A549 (cell line): ENCODE measurements at regions of chr7 and their contacts with region 1.

Region 1: GRCh38 chr7:134432296-134433152 is 26.4 kb downstream of the AKR1B1 start:
- DNase-seq: peak; percentile 99 to 100
- ATAC-seq: peak; percentile 92 to 96
- H3K4me3 ChIP-seq: peak overlapping the region; percentile 46
- H3K27ac ChIP-seq: peak overlapping the region; percentile 79 to 88
- H3K4me1 ChIP-seq: peaks cover 30% of the 10 kb centered on the region
- CTCF ChIP-seq: peak; percentile 100
- EP300 ChIP-seq: no peak
- POLR2A ChIP-seq: no peak; the same call in 1 of the 2 replicates
- RAD21 ChIP-seq: peak; percentile 100

Region 2: DNA sequence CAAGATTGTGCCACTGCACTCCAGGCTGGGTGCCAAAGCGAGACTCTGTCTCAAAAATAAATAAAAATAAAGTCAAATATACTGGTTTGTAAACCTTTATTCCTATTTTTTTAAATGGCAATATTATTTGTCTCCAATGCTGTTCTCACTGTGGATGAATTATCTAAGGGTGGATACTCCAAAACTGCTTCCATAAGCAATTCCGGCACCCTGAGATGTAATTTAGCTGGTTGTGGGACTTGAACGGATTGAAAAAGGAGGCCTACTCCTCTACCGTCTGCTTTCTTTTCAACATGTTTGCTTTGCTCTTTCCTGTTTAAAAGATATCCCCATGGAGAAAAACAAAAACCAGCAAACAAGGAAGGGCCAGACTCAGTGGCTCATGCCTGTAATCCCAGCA is 170.2 kb before region 1 on chr7:
- CTCF ChIA-PET with region 1: no interaction called
- POLR2A ChIA-PET with region 1: no interaction called
- DNase-seq: no peak
- ATAC-seq: no peak
- H3K4me3 ChIP-seq: no peak overlapping the region
- H3K27ac ChIP-seq: no peak overlapping the region
- H3K4me1 ChIP-seq: no peaks in the 10 kb centered on the region
- CTCF ChIP-seq: no peak
- EP300 ChIP-seq: no peak
- POLR2A ChIP-seq: no peak
- RAD21 ChIP-seq: no peak

Region 3: DNA sequence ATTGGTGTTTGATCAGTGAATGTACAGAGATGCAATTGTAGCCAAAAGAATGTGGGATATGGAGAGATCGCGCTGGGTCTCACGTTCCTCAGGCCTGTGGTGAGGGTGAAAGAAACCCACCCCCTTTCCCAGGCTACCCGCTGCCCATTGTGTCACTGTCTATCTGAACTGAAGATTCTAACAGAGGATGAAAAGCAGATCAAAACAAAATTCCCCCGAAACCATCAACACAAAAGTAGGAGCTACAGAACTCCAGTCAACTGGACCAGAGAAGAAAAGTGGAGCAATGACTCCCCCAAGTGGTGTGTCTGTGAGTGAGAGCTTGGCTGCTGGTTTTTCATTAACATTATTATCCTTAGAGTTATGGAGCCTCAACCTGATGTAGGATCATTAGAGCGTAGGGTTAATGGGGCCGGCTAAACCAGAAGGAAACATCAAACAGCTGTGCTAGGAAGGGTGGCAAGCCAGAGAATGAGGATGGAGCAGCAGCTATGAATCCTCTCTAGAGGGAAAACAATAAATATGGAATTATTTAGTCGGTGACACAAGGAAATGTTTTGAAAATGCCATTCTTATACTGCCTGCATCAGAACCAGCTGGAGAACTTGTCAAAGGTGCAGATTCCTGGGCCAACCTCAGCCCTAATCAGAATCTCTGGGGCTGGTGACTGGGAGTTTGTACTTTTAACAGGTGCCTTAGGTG is 11.9 kb before region 1 on chr7:
- CTCF ChIA-PET with region 1: interaction called, 103 read pairs
- POLR2A ChIA-PET with region 1: interaction called, 19 read pairs
- DNase-seq: peak; percentile 88 to 92
- ATAC-seq: peak; percentile 78 to 86
- H3K4me3 ChIP-seq: no peak overlapping the region
- H3K27ac ChIP-seq: peak overlapping the region; percentile 79 to 87
- H3K4me1 ChIP-seq: peaks cover 64% of the 10 kb centered on the region
- CTCF ChIP-seq: peak; percentile 99
- EP300 ChIP-seq: no peak
- POLR2A ChIP-seq: no peak
- RAD21 ChIP-seq: peak; percentile 99 to 100

Region 4: DNA sequence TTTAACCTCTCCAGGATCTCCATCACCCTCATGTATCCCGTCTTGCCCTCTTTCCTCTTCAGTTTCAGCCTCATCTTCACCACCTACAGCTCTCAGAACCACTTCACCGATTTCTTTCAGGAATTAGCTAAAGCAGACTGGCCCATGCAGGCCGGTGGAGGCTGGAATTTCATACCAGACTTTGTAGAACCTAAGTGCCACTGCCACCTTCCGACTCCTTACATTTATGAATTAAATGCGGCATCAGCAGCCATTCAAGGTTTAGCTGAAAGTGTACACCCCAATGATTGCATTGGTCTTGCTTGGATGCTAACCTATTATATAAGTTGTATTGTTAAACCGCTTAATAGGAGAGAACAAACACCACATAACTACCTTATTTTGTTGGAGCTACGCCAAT is 59.4 kb after region 1 on chr7:
- CTCF ChIA-PET with region 1: interaction called, 99 read pairs
- POLR2A ChIA-PET with region 1: no interaction called
- DNase-seq: no peak
- ATAC-seq: no peak
- H3K4me3 ChIP-seq: no peak overlapping the region
- H3K27ac ChIP-seq: no peak overlapping the region
- H3K4me1 ChIP-seq: no peaks in the 10 kb centered on the region
- CTCF ChIP-seq: no peak
- EP300 ChIP-seq: no peak
- POLR2A ChIP-seq: no peak
- RAD21 ChIP-seq: no peak

Region 5: GRCh38 chr7:134533288-134533771 is 100.8 kb after region 1 on chr7:
- CTCF ChIA-PET with region 1: interaction called, 22 read pairs
- POLR2A ChIA-PET with region 1: interaction called, 8 read pairs
- DNase-seq: no peak
- ATAC-seq: peak in 1 of 2 experiments; percentile 6; a peak in 3 of 6 replicates
- H3K4me3 ChIP-seq: peak overlapping the region; percentile 84
- H3K27ac ChIP-seq: peak overlapping the region; percentile 91 to 98
- H3K4me1 ChIP-seq: peaks cover 72% of the 10 kb centered on the region
- CTCF ChIP-seq: no peak
- EP300 ChIP-seq: peak; percentile 27 to 74; a peak in 3 of 5 replicates
- POLR2A ChIP-seq: no peak
- RAD21 ChIP-seq: 0 out of 5 replicates have a peak, but pooled peaks of 1 of the 2 experiments have one; percentile 10

Region 6: GRCh38 chr7:134613623-134614347 is 181.3 kb after region 1 on chr7:
- CTCF ChIA-PET with region 1: interaction called, 124 read pairs
- POLR2A ChIA-PET with region 1: interaction called, 3 read pairs
- DNase-seq: peak; percentile 57 to 86
- ATAC-seq: peak; percentile 90 to 94
- H3K4me3 ChIP-seq: no peak overlapping the region
- H3K27ac ChIP-seq: peak overlapping the region; percentile 72 to 80
- H3K4me1 ChIP-seq: peaks cover 25% of the 10 kb centered on the region
- CTCF ChIP-seq: no peak
- EP300 ChIP-seq: peak; percentile 50 to 73; a peak in 3 of 5 replicates
- POLR2A ChIP-seq: no peak
- RAD21 ChIP-seq: peak; percentile 7 to 46; a peak in 3 of 5 replicates

Region 7: GRCh38 chr7:134690016-134690415 is 257.5 kb after region 1 on chr7:
- CTCF ChIA-PET with region 1: interaction called, 18 read pairs
- POLR2A ChIA-PET with region 1: no interaction called
- DNase-seq: peak in 1 of 2 experiments; percentile 40
- ATAC-seq: peak; percentile 51 to 68; a peak in 3 of 6 replicates
- H3K4me3 ChIP-seq: no peak overlapping the region
- H3K27ac ChIP-seq: peak overlapping the region in 1 of 2 experiments; percentile 34; a peak in 1 of 6 replicates
- H3K4me1 ChIP-seq: no peaks in the 10 kb centered on the region
- CTCF ChIP-seq: peak; percentile 60
- EP300 ChIP-seq: no peak
- POLR2A ChIP-seq: no peak
- RAD21 ChIP-seq: peak; percentile 66 to 79